IMR-90 (cell line): ENCODE measurements at regions of chr12 and their contacts with region 1.

Region 1: DNA sequence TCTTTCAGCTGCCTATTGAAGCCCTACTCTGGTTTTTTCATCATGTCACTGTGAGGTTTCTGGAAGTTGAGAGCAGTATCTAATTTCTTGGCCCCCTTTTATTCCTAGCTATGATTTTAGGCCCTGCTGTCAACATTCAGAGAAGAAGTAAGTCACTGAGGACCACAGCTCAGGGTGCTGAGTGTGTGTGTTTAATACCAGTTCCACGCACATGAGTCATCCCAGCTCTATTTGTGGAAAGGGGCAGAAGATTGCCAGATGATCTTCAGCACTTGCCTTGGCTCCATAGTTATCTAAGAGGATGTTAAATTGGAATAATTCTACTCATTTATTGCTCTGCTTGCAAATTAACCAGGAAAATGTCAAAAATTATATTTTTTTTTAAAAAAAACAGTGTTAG is 65.5 kb upstream of the SLC38A4 start:
- DNase-seq: peak; percentile 65
- ATAC-seq: peak; percentile 51
- H3K4me3 ChIP-seq: no peak overlapping the region
- H3K27ac ChIP-seq: no peak overlapping the region
- H3K4me1 ChIP-seq: peaks cover 6% of the 10 kb centered on the region
- H3K27me3 ChIP-seq: no peaks in the 10 kb centered on the region
- CTCF ChIP-seq: no peak
- POLR2A ChIP-seq: no peak
- RAD21 ChIP-seq: no peak

Region 2: GRCh38 chr12:46786774-46787173 is 104.5 kb before region 1 on chr12:
- CTCF ChIA-PET with region 1: no interaction called
- POLR2A ChIA-PET with region 1: interaction called, 12 read pairs
- dilution Hi-C with region 1: no loop called
- in situ Hi-C with region 1: no loop called
- intact Hi-C with region 1: no loop called
- DNase-seq: peak; percentile 85
- ATAC-seq: peak; percentile 84
- H3K4me3 ChIP-seq: no peak overlapping the region
- H3K27ac ChIP-seq: peak overlapping the region; percentile 96
- H3K4me1 ChIP-seq: peaks cover 19% of the 10 kb centered on the region
- H3K27me3 ChIP-seq: no peaks in the 10 kb centered on the region
- CTCF ChIP-seq: no peak
- POLR2A ChIP-seq: no peak
- RAD21 ChIP-seq: no peak

Region 3: GRCh38 chr12:46985816-46986215 is 94.5 kb after region 1 on chr12:
- CTCF ChIA-PET with region 1: no interaction called
- POLR2A ChIA-PET with region 1: no interaction called
- dilution Hi-C with region 1: no loop called
- in situ Hi-C with region 1: no loop called
- intact Hi-C with region 1: no loop called
- DNase-seq: no peak
- ATAC-seq: no peak
- H3K4me3 ChIP-seq: no peak overlapping the region
- H3K27ac ChIP-seq: no peak overlapping the region
- H3K4me1 ChIP-seq: no peaks in the 10 kb centered on the region
- H3K27me3 ChIP-seq: no peaks in the 10 kb centered on the region
- CTCF ChIP-seq: no peak
- POLR2A ChIP-seq: no peak
- RAD21 ChIP-seq: no peak

Region 4: DNA sequence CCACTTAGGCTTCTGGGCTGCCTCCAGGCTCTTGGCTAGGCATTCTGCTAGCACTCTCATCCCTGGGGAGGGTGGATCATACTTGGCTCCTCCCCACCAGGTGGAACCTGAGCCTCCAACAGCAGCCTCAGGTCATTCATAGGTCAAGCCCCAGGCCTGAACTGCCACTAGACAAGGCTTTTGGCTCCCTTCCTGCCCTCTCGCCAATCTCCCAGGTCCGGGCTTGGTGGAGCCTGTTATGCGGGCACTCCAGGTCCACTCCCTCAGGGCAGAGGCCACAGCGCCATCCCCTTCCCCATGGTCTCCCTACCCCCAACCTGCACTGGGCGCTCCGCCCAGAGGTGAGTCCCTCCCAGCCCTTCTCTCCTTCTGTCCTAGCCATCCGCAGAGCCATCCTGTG is 343.3 kb after region 1 on chr12:
- CTCF ChIA-PET with region 1: no interaction called
- POLR2A ChIA-PET with region 1: no interaction called
- dilution Hi-C with region 1: no loop called
- in situ Hi-C with region 1: no loop called
- intact Hi-C with region 1: no loop called
- DNase-seq: no peak
- ATAC-seq: no peak
- H3K4me3 ChIP-seq: no peak overlapping the region
- H3K27ac ChIP-seq: no peak overlapping the region
- H3K4me1 ChIP-seq: peaks cover 4% of the 10 kb centered on the region
- H3K27me3 ChIP-seq: no peaks in the 10 kb centered on the region
- CTCF ChIP-seq: no peak
- POLR2A ChIP-seq: no peak
- RAD21 ChIP-seq: no peak